Activated CD4-positive, alpha-beta T cell treated with anti-CD3 and anti-CD28 coated beads, Interleukin-2, amount 10 ng/mL, durations not matched to agents 24 days and 14 days (primary cell): ENCODE measurements at regions of chr1 and their contacts with region 1.

Region 1: GRCh38 chr1:58739856-58740466 is 40.1 kb upstream of the MYSM1 start:
- DNase-seq: peak; percentile 82
- H3K4me3 Mint-ChIP-seq: no peak overlapping the region
- H3K27ac Mint-ChIP-seq: no peak overlapping the region
- H3K4me1 Mint-ChIP-seq: peaks cover 6% of the 10 kb centered on the region
- H3K27me3 Mint-ChIP-seq: peaks cover 7% of the 10 kb centered on the region

Region 2: DNA sequence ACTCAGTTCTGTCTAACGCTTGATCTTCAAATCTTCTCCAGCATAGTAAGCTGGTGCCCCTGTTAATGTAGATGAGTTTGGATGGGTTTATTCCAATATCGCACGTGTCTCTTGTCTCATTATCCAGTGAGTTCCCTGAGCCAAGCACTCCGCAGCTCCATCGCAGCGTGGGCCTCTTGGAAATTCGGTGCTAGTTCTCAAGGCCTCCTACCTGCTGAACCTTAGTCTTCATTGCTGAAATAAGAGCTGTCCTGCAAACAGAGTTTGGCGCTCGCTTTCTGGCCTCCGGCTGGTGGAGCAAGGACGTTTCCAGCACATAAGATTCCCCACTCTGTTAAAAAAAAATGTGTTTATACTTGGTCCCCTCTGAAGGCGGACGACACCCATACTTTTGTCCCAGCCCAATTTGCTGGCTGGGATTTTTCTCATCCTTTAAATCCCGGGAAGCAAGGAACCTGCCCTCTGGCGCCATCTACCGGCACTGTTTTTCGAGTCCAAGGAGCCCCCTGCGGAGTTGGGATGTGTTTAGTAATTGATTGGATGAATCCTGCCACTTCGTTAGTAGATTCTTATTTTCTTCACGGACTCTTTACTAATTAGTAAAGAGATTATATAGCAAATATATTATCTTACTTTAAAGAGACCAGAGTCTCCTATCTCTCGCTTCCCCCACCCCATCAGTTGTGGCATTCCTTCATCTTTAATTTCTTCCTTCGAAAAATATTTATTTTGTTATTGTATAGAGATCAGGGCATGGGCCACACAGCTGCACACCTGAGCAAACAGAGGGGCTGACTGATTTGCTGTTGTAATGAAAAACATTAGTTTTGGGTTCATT is 29.2 kb after region 1 on chr1:
- intact Hi-C with region 1: loop called (anchors 2 kb)
- DNase-seq: peak; percentile 82
- H3K4me3 Mint-ChIP-seq: no peak overlapping the region
- H3K27ac Mint-ChIP-seq: no peak overlapping the region
- H3K4me1 Mint-ChIP-seq: peaks cover 14% of the 10 kb centered on the region
- H3K27me3 Mint-ChIP-seq: peaks cover 3% of the 10 kb centered on the region

Region 3: DNA sequence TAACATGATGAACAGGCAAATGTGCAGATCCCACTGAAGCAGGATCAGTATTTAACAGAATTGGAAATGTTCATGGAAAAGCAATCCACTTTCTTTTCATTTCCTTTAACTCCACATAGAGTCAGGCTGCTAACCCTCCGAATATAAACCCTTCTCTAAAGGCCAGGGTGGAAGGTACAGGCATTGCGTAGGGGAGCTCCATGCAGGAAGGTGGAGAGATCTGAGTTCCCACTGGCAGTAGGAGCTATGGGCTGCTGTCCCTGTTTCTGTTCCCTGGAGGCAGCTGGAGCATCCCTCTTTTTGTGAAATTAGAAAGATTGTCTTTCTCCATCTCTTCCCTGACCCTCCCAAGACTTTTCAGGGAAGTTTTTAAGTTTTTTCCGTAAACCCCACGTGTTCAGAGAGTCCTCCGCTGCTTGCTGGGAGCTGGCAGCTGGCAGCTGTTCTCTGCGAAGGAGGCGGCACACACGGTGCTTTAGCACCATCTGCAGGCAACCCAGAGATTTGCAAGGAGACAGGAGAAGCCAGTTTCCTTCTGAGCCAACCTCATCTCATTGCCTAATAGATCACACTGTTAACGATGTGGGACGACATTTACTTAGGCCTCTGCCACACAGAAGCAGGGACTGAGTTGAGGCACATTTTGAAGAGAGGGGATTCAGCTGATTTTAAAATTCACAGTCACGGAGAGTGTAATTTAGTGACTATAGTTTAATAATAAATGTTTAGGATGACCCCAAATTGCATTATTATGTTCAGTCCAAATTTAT is 1019.4 kb after region 1 on chr1:
- intact Hi-C with region 1: loop called (anchors 1 kb)
- DNase-seq: peak; percentile 92
- H3K4me3 Mint-ChIP-seq: peak overlapping the region; percentile 40
- H3K27ac Mint-ChIP-seq: no peak overlapping the region
- H3K4me1 Mint-ChIP-seq: peaks cover 4% of the 10 kb centered on the region
- H3K27me3 Mint-ChIP-seq: no peaks in the 10 kb centered on the region